Activated CD8-positive, alpha-beta memory T cell treated with anti-CD3 and anti-CD28 coated beads, Interleukin-2, amount 10 ng/mL, durations not matched to agents 7 days and 5 days (primary cell): ENCODE measurements at regions of chr14 and their contacts with region 1.

Region 1: GRCh38 chr14:65302571-65303189 is 109.8 kb upstream of the FUT8 start:
- DNase-seq: peak; percentile 94
- ATAC-seq: peak; percentile 84
- H3K4me3 Mint-ChIP-seq: peak overlapping the region; percentile 78
- H3K27ac Mint-ChIP-seq: peak overlapping the region; percentile 92
- H3K4me1 Mint-ChIP-seq: peaks cover 75% of the 10 kb centered on the region
- H3K27me3 Mint-ChIP-seq: no peaks in the 10 kb centered on the region

Region 2: DNA sequence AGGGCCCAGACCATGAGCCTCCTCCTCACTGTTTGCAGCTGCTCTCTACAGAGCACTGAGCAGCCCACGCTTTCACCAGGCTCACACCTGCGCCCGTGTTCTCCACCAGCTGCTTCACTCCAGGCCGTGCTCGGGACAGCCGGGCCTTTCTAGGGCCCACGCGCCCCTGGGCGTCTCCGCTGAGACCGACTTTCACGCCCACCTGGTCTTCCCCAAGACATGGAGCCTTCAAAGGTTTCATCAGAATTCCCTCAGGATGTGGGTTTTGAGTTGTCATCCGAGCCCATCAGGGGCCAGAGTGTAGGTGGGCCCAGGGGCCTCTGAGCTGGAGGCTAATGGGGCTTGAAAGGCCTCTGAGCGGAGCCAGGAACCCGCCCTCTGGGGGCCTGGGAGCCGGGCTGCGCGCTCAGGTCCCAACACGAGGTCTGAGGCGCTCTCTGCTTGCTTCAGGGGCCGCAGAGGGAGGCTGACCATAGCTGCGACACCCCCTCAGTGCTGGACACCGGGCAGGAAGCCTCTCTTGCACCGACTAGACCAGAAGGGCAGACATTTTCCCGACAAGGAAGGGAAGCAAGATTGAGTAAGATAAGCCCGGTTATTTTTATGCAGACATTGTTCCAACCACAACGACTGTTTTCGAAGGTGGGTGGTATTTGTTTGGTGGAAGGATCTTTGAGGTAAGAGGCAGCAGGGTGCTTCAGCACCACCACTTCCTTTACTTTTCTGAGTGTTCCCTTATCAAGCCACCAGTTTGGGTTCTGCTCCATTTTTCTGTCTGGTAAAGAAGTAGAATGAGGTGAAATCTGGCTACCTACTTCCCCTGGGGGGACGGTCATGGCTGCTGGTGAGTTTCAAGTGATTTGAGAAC is 15.2 kb before region 1 on chr14:
- CTCF ChIA-PET with region 1: interaction called, 23 read pairs
- DNase-seq: peak; percentile 82
- ATAC-seq: peak; percentile 75
- H3K4me3 Mint-ChIP-seq: peak overlapping the region; percentile 71
- H3K27ac Mint-ChIP-seq: peak overlapping the region; percentile 93
- H3K4me1 Mint-ChIP-seq: peaks cover 68% of the 10 kb centered on the region
- H3K27me3 Mint-ChIP-seq: no peaks in the 10 kb centered on the region

Region 3: DNA sequence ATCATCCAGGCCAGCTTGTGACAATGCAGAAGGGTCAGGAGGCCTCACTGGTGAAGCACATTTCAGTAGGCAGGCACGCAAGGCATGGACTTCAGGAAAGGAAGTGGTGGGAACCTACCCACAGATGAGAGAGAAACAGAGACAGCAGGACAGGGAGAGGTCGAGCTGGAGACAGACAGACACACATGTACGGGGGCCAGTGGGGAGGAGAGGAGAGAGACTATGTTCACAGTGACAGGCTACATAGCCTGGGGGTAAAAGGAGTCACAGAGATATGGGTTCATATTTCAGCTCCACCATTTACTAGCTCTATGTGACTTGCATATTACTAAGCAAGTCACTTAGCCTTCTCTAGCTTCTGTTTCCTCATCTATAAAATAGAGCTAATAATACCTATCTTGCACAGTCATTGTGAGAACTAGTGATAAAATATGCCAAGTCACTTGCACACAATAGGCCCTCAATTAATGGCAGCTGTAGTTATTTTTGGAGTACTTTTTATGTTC is 18.7 kb after region 1 on chr14:
- CTCF ChIA-PET with region 1: interaction called, 47 read pairs
- DNase-seq: peak; percentile 75
- ATAC-seq: peak; percentile 85
- H3K4me3 Mint-ChIP-seq: peak overlapping the region; percentile 18
- H3K27ac Mint-ChIP-seq: peak overlapping the region; percentile 88
- H3K4me1 Mint-ChIP-seq: peaks cover 62% of the 10 kb centered on the region
- H3K27me3 Mint-ChIP-seq: no peaks in the 10 kb centered on the region

Region 4: DNA sequence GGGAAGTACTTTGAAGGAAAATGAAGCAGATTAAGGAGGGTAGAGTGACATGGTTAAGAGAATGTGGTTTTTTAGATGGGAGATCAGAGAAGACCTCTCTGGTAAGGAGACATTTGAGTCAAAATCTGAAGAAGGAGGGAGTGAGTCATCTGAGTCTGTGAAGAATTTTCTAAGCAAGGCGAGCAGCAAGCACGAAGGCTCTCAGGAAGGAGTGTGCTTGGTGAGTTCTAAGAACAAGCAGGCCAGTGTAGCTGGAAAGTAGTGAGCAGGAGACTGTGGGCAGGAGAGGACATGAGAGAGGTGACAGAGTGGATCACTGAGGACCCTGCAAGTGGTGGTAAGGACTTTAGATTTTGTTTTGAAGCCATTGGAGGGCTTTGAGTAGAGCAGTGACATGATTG is 33.5 kb after region 1 on chr14:
- CTCF ChIA-PET with region 1: interaction called, 10 read pairs
- DNase-seq: peak; percentile 85
- ATAC-seq: peak; percentile 92
- H3K4me3 Mint-ChIP-seq: peak overlapping the region; percentile 81
- H3K27ac Mint-ChIP-seq: peak overlapping the region; percentile 91
- H3K4me1 Mint-ChIP-seq: peaks cover 62% of the 10 kb centered on the region
- H3K27me3 Mint-ChIP-seq: no peaks in the 10 kb centered on the region

Region 5: DNA sequence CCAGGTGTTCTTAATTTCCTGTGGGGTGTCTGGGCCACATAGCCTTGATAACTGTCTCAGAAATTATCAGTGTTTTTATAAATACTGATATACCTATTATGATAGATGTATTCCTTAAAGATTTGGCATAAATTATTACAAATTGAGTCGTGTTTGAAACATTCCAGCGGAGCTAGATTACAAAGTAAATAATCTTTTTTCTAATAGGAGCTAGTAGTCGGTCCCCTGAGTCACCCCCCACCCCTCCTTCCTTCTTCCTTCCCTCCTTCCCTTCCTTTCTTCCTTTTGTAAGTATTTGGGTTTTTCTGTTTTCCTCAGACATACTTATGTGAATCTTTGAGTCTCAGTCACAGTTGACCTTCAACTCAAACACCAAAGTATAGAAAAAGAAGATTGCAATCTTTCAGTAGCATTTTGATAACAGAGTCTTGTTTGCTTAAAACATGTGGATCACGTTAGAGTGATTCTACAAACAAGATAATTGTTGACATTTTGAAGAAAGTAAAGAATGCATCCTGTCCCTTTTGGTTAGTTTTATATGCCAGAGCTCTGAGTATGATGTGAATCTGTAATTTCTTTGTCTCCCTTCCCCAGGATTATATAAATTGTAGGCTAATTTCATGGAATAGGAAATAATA is 373.8 kb after region 1 on chr14:
- CTCF ChIA-PET with region 1: no interaction called
- DNase-seq: no peak
- ATAC-seq: no peak
- H3K4me3 Mint-ChIP-seq: no peak overlapping the region
- H3K27ac Mint-ChIP-seq: no peak overlapping the region
- H3K4me1 Mint-ChIP-seq: no peaks in the 10 kb centered on the region
- H3K27me3 Mint-ChIP-seq: no peaks in the 10 kb centered on the region